ENCODE measurements at regions of chr7 and their contacts with region 1.

Region 1: DNA sequence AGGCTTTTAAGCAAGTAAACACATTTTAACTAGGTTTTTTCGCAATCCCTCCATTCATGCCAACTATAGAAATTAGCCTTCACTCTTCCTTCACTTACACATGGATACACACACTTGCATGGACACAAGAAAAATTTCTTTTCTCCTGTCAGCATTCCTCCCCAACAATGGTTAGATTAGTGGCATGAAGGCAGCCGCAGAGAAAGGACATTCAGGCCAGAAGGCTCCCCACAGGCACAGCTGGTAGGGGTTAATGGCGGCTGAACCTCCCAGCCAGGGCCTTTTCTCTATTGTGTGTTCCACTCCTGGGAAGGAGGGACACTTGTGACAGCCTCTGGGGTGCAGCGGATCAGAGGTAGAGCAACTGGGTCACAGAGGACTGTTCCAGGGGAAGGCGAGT is 255.0 kb upstream of the SP8 start:
- DNase-seq: no peak
- ATAC-seq: no peak
- H3K4me3 ChIP-seq: no peak overlapping the region
- H3K27ac ChIP-seq: no peak overlapping the region
- H3K4me1 ChIP-seq: no peaks in the 10 kb centered on the region
- H3K27me3 ChIP-seq: peaks cover 0 to 3% (median 0%) of the 10 kb centered on the region in 7 donors
- CTCF ChIP-seq: no peak

Region 2: GRCh38 chr7:21108182-21108581 is 66.5 kb after region 1 on chr7:
- intact Hi-C with region 1: loop called in 1 of 10 experiments (anchors 10 kb)
- DNase-seq: peak in 1 of 2 donors; percentile 12
- ATAC-seq: peak in 1 of 8 donors; percentile 45
- H3K4me3 ChIP-seq: no peak overlapping the region
- H3K27ac ChIP-seq: no peak overlapping the region
- H3K4me1 ChIP-seq: peaks cover 0 to 3% (median 0%) of the 10 kb centered on the region in 9 donors
- H3K27me3 ChIP-seq: no peaks in the 10 kb centered on the region
- CTCF ChIP-seq: no peak

Measured in heart right ventricle (tissue), 16 donors.